MCF 10A (cell line): ENCODE measurements at regions of chr5 and their contacts with region 1.

Region 1: DNA sequence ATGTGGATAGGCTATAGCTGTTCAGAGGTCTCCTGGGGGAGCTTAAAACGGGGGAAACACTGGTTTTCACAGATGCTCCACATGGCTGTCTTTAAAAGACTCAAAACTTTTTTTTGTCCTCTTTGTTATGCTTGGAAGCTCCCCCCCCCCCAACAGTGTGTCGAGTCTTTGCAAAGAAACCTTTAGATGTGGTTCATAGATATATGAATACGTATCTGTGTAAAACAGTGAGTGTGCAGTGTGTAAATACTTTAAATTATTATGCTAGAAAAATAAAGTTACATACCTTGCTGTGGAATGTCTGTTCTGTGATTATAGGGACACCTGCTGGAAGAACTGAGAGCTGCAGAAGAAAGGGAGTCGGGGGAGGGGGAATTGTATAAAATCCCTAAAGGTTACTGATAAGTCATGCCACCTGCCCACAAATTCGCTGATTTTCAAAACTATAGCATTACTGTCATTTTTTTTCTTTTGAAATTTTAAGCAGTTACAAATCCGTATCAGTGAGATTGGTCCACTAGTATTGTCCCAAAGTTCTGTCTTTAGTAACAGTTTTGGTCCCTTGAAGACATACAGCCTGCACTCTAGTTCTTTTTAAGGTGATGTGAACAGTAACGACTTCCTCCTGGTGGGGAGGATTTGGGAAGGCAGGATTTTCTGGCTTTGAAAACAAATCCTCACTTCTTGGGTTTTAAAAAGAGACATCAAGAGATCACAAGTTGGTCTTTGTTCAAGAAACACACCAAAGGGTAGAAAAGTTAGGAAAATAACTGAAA is 22.9 kb downstream of the RGMB start:
- DNase-seq: peak; percentile 74
- H3K4me3 Mint-ChIP-seq: no peak overlapping the region
- H3K27ac Mint-ChIP-seq: no peak overlapping the region
- H3K4me1 Mint-ChIP-seq: no peaks in the 10 kb centered on the region
- H3K27me3 Mint-ChIP-seq: no peaks in the 10 kb centered on the region
- CTCF ChIP-seq: peak; percentile 73

Region 2: GRCh38 chr5:98780390-98780789 is 16.0 kb before region 1 on chr5:
- CTCF ChIA-PET with region 1: interaction called, 23 read pairs
- POLR2A ChIA-PET with region 1: interaction called, 14 read pairs
- intact Hi-C with region 1: no loop called
- DNase-seq: no peak
- H3K4me3 Mint-ChIP-seq: no peak overlapping the region
- H3K27ac Mint-ChIP-seq: no peak overlapping the region
- H3K4me1 Mint-ChIP-seq: peaks cover 40% of the 10 kb centered on the region
- H3K27me3 Mint-ChIP-seq: no peaks in the 10 kb centered on the region
- CTCF ChIP-seq: no peak

Region 3: DNA sequence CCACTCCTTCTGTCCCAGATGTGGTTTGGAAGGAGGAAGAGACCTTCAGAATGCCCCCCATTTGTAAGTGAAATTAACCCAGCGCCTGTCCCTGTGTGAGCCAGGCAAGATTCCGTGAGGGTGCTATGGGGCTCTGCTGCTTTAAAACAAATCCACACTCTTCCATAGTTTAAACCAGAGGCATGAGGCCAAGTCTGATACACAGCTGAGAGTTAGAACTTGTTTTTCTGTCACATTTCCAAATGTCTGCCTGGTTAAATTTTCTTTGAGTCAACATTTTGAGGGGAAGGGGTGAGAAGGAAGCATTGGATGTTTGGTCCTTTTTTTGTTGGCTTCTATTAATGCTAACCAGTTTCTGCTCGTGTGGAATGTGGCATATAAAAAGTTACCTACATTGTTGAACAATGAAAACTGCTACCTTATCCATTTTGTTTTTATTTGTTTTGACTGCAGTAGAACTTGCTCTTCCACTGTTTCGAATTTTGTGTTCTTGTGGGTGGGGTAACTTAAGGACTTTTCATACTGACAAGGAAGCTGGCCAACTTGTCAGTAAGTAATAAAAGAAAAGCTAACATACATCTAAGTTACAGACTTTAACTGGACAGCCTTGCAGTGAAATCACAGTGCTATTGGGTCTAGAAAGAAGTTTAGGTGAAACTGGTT is 10.1 kb before region 1 on chr5:
- CTCF ChIA-PET with region 1: interaction called, 21 read pairs
- POLR2A ChIA-PET with region 1: interaction called, 3 read pairs
- intact Hi-C with region 1: no loop called
- DNase-seq: no peak
- H3K4me3 Mint-ChIP-seq: no peak overlapping the region
- H3K27ac Mint-ChIP-seq: peak overlapping the region; percentile 28
- H3K4me1 Mint-ChIP-seq: peaks cover 40% of the 10 kb centered on the region
- H3K27me3 Mint-ChIP-seq: no peaks in the 10 kb centered on the region
- CTCF ChIP-seq: no peak